Psoas muscle (tissue), 8 donors: ENCODE measurements at regions of chr7 and their contacts with region 1.

Region 1: GRCh38 chr7:104156842-104157277 is 51.0 kb downstream of the ORC5 start:
- DNase-seq: no peak
- ATAC-seq: no peak
- H3K4me3 ChIP-seq: no peak overlapping the region
- H3K27ac ChIP-seq: no peak overlapping the region
- H3K4me1 ChIP-seq: no peaks in the 10 kb centered on the region
- H3K27me3 ChIP-seq: no peaks in the 10 kb centered on the region
- CTCF ChIP-seq: peak; percentile 59

Region 2: GRCh38 chr7:103524042-103524907 is 632.6 kb before region 1 on chr7:
- intact Hi-C with region 1: loop called in 1 of 2 experiments (anchors 10 kb)
- DNase-seq: no peak
- ATAC-seq: no peak
- H3K4me3 ChIP-seq: no peak overlapping the region
- H3K27ac ChIP-seq: no peak overlapping the region
- H3K4me1 ChIP-seq: no peaks in the 10 kb centered on the region
- H3K27me3 ChIP-seq: no peaks in the 10 kb centered on the region
- CTCF ChIP-seq: peak; percentile 32

Region 3: GRCh38 chr7:103573479-103574058 is 583.3 kb before region 1 on chr7:
- intact Hi-C with region 1: loop called in 1 of 2 experiments (anchors 5 kb)
- DNase-seq: no peak
- ATAC-seq: no peak
- H3K4me3 ChIP-seq: no peak overlapping the region
- H3K27ac ChIP-seq: no peak overlapping the region
- H3K4me1 ChIP-seq: no peaks in the 10 kb centered on the region
- H3K27me3 ChIP-seq: no peaks in the 10 kb centered on the region
- CTCF ChIP-seq: peak; percentile 57

Region 4: DNA sequence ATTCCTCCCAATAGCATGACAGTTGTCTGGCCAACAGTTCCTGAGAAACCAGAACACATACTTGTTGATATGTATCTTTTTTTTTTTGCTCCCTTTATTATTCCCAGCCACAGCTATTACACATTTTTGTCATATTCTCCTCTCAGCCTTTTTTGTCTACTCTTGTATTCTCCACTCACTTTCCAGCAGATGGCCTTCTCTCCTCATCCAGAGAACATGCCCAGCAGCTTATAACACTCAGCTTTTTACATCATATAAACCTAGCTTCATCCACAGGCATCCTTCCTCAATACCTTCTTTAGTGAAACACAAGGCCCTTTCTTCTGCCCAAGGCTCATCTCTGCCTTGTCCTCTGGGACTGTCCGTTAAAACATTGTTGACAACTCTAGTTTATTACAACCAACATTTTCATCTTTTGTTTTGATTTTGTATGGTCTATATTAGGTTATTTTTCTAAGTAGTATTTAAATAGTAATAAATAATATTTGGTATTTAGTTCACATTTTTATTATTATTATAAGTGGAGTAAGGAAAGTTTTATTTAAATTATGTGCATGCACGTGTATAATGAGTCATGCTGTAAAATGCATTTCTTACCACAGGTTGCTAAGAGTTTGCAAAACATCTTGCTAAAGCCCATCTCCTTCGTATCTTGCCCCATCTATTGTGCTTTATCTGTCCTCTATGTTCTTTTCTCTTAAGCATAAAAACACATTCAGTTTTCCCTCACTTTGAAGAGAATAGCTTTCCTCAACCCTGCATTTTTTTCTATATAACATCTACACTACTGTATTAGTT is 50.6 kb before region 1 on chr7:
- intact Hi-C with region 1: loop called (anchors 1 to 5 kb)
- DNase-seq: no peak
- ATAC-seq: peak in 1 of 4 donors; percentile 27
- H3K4me3 ChIP-seq: no peak overlapping the region
- H3K27ac ChIP-seq: no peak overlapping the region
- H3K4me1 ChIP-seq: no peaks in the 10 kb centered on the region
- H3K27me3 ChIP-seq: no peaks in the 10 kb centered on the region
- CTCF ChIP-seq: peak; percentile 43

Region 5: DNA sequence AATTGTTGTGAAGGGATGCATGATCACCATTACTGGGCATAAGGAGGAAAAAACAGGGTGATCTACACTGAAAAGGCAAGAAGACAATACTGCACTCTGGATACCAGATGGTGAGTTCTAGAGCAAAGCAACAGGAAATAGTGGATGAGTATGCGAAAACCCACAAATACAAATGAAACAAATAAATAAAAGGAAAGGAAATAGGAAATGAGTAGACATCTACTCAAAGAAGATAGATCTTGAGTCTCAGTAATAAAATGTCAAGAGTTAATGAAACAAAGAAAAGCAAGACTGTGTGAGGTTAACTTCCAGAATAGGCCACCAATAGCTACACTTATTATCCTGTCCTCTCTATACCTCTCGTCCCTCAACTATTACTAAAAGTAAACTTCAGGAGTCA is 39.3 kb after region 1 on chr7:
- intact Hi-C with region 1: no loop called
- DNase-seq: no peak
- ATAC-seq: no peak
- H3K4me3 ChIP-seq: no peak overlapping the region
- H3K27ac ChIP-seq: no peak overlapping the region
- H3K4me1 ChIP-seq: no peaks in the 10 kb centered on the region
- H3K27me3 ChIP-seq: no peaks in the 10 kb centered on the region
- CTCF ChIP-seq: no peak